Right ventricle myocardium inferior (tissue), 1 donor: ENCODE measurements at regions of chr10 and their contacts with region 1.

Region 1: GRCh38 chr10:66925896-66926715 is at the start of gene LRRTM3:
- DNase-seq: no peak
- ATAC-seq: peak; percentile 89
- total RNA-seq, gene LRRTM3: not detected

Region 2: DNA sequence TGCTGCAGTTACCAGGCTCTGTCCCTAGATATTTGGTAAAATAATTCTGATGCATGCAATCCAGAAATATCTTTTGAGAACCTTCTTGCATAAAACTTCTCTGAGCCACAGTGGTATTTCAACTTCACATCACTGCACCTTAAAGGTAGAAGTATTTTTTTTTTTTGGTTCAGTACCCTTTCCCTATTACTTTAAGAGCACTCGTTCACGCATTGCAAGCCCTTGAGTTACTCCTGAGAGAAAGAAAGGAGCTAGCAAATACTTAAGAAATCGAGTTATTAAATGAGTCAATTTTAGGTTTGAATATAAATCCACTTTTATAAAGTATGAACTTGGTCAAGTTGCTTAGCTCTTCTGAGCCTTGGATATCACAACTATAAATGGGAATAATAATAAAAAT is 607.3 kb before region 1 on chr10:
- intact Hi-C with region 1: loop called (anchors 10 kb)
- DNase-seq: no peak
- ATAC-seq: no peak

Region 3: GRCh38 chr10:66982792-66983477 is 56.8 kb after region 1 on chr10:
- intact Hi-C with region 1: no loop called
- DNase-seq: no peak
- ATAC-seq: no peak

Region 4: DNA sequence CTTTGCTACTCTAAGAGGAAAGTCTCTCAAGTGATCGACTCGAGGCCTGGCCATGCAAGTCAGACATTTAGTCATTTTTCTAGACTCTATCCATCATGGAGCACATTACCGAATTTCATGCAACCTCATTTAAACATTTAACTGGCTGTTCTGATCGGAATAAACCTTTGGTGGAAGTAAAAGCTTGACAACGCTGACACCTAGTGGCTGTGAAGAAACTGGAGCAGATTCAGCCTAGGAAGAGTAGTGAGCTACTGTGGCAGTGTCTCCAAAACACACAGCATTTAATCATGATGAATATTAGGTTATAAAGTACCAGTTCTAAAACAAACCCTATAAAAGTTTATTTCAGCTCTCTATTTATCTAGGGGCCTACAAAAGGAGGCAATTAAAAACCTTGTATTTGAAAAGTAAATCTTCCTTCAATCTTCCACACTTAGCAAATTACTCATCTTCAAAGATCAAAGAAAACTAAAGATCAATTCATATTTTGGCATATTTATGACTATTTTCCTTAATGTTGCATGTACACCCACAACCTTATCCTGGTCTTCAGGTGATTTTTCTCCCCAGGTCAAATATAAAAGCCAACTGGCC is 594.9 kb after region 1 on chr10:
- intact Hi-C with region 1: loop called (anchors 10 kb)
- DNase-seq: no peak
- ATAC-seq: peak; percentile 80